Motor neuron (in vitro differentiated cells): ENCODE measurements at regions of chr5 and their contacts with region 1.

Region 1: GRCh38 chr5:34898258-34898895 is 16.9 kb downstream of the RAD1 start:
- ATAC-seq: peak; percentile 81 to 98 (median 94)
- H3K4me3 ChIP-seq: no peak overlapping the region
- H3K27ac ChIP-seq: no peak overlapping the region
- H3K4me1 ChIP-seq: no peaks in the 10 kb centered on the region

Region 2: GRCh38 chr5:34474573-34475021 is 423.8 kb before region 1 on chr5:
- in situ Hi-C with region 1: loop called in 3 of 9 experiments (anchors 10 to 25 kb)
- ATAC-seq: peak; percentile 44 to 88 (median 64)
- H3K4me3 ChIP-seq: no peak overlapping the region
- H3K27ac ChIP-seq: no peak overlapping the region
- H3K4me1 ChIP-seq: peaks cover 0 to 3% of the 10 kb centered on the region in 2 donors

Region 3: GRCh38 chr5:34499001-34499734 is 399.2 kb before region 1 on chr5:
- in situ Hi-C with region 1: loop called in 6 of 9 experiments (anchors 10 to 25 kb)
- ATAC-seq: peak in 4 of 8 experiments; percentile 48 to 82 (median 72)
- H3K4me3 ChIP-seq: no peak overlapping the region
- H3K27ac ChIP-seq: no peak overlapping the region
- H3K4me1 ChIP-seq: peaks cover 3 to 11% of the 10 kb centered on the region in 2 donors

Region 4: DNA sequence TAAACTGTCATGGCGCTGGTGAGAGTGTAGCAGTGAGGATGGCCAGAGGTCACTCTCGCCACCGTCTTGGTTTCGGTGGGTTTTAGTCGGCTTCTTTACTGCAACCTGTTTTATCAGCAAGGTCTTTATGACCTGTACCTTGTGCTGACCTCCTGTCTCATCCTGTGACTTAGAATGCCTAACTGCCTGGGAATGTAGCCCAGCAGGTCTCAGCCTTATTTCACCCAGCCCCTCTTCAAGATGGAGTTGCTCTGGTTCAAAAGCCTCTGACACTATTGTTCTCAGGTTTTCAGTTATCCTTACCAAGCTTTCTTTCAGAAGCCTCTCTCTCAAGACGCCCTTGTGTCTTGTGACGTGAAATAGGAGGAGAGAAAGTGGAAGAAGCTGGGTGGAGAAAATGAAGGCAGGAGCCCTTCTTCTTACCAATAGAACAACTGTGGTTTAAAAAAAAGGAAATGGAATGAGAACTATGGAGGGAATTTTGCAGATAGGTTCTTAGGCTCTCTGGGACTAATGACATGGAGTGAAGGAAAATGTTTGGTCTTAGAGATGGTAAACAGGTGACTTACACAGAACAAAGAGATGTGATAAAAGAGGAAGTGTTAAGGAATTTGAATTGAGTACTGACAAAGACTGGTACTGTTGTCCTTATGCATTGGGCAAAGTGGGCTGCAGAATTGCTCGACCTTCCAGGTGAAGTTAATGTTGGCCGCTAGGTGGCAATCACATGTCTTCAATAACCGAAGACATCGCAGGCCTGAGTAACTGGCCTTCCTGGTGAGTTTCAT is 375.6 kb before region 1 on chr5:
- in situ Hi-C with region 1: loop called in 3 of 9 experiments (anchors 25 kb)
- ATAC-seq: peak; percentile 76 to 98 (median 88)
- H3K4me3 ChIP-seq: no peak overlapping the region
- H3K27ac ChIP-seq: no peak overlapping the region
- H3K4me1 ChIP-seq: peaks cover 3 to 4% of the 10 kb centered on the region in 2 donors

Region 5: DNA sequence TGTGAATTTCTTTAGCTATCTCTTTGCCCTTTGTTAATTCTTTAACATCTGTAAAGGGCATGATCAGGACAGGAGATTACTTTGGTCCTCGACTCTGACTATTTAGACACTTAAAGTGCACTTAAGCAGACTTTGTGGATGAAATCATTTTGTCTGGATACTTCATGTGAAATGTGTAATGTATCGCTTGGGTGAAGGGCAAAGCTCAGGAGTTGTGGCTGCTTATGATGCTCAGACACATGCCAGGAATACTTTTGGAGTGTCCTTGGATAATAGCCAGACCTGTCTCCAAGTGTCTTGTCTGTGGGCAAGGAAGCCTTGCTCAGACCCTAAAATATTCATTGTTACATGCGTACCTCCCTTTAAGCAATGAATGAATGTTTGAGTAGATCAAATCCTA is 154.5 kb before region 1 on chr5:
- in situ Hi-C with region 1: no loop called
- ATAC-seq: peak in 3 of 8 experiments; percentile 9 to 82 (median 55)
- H3K4me3 ChIP-seq: no peak overlapping the region
- H3K27ac ChIP-seq: no peak overlapping the region
- H3K4me1 ChIP-seq: peaks cover 2 to 6% of the 10 kb centered on the region in 2 donors